ENCODE measurements at regions of chr6 and their contacts with region 1.

Region 1: DNA sequence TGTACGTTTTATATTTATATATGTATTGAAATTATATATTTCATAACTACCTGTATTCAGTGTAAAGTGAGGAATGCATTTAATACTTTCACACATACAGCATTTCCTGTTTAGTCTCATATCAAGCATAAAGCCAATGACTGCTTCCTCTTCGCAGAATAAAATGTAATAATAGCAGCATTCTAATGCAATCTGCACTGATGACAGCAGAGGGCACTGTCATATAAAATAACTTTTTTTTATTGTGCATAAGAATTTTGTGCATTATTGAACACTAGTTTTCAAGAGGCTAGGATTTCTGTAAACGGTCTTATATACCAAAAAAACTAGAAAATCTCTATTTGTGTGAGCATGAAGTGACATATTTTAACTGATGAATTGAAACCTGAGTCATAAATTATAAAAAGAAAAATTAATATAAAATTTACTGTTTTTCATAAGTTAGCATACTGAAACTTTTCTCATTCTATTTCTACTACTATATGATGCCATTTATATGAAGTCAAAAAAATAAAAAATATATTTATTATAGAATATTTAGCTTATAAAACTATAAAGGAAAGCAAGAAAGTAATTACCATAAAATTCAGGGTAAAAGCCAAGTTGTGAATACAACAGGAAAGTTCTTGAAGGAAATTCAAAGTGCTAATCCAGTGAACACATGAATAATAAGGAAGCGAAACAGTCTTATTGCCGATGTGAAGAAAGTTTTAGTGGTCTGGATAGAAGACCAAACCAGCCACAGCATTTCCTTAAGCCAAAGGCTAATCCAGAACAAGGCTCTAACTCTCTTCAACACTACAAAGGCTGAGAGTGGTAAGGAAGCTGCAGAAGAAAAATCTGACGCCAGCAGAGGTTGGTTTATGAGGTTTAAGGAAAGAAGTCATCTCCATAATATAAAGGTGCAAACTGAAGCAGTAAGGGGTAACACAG is 36.3 kb downstream of the RNF146 start:
- DNase-seq: peak in 7 of 9 experiments; percentile 13 to 69 (median 45)
- ATAC-seq: peak; percentile 97
- H3K4me3 ChIP-seq: no peak overlapping the region
- H3K4me3 Mint-ChIP-seq: no peak overlapping the region
- H3K27ac ChIP-seq: no peak overlapping the region
- H3K27ac Mint-ChIP-seq: no peak overlapping the region
- H3K4me1 ChIP-seq: no peaks in the 10 kb centered on the region
- H3K4me1 Mint-ChIP-seq: peaks cover 43% of the 10 kb centered on the region
- H3K27me3 ChIP-seq: no peaks in the 10 kb centered on the region
- H3K27me3 Mint-ChIP-seq: no peaks in the 10 kb centered on the region
- CTCF ChIP-seq: peak; percentile 96

Region 2: GRCh38 chr6:127342946-127343808 is 40.2 kb after region 1 on chr6 and contains the start of gene ECHDC1:
- CTCF ChIA-PET with region 1: no interaction called
- POLR2A ChIA-PET with region 1: no interaction called
- intact Hi-C with region 1: loop called in 1 of 2 experiments (anchors 5 kb)
- DNase-seq: peak; percentile 50 to 85 (median 74)
- ATAC-seq: peak; percentile 85
- H3K4me3 ChIP-seq: peak within 1 kb of the TSS; percentile 65 to 96
- H3K4me3 Mint-ChIP-seq: no peak within 1 kb of the TSS
- H3K27ac ChIP-seq: peak within 1 kb of the TSS; percentile 88 to 93
- H3K27ac Mint-ChIP-seq: no peak within 1 kb of the TSS
- H3K4me1 ChIP-seq: peaks cover 41% of the 10 kb centered on the region
- H3K4me1 Mint-ChIP-seq: peaks cover 14% of the 10 kb centered on the region
- H3K27me3 ChIP-seq: no peaks in the 10 kb centered on the region
- H3K27me3 Mint-ChIP-seq: no peaks in the 10 kb centered on the region
- CTCF ChIP-seq: no peak
- total RNA-seq, gene ECHDC1: 9.3 to 10.0 TPM

Region 3: DNA sequence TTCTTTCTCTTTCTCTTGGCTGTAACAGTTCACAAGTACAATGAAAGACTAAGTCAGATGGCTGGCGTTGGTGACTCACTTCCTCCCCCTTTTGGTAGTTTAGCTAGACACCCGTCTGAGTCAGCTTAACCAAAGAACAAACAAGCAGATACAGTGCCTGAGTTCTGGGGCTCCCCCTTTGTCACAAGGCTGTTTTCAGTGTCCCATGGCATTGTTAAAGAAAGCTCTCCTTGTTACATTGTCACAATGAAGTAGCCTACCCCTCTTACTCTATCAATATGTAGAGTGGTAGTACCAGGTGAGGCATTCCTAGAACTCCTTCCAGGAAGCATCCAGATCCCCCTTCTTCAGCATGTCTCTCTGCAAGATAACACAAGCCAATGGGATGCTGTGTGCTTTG is 117.6 kb after region 1 on chr6:
- CTCF ChIA-PET with region 1: interaction called, 11 read pairs
- POLR2A ChIA-PET with region 1: no interaction called
- intact Hi-C with region 1: loop called (anchors 1 to 2 kb)
- DNase-seq: peak; percentile 12 to 76 (median 58)
- ATAC-seq: peak; percentile 97
- H3K4me3 ChIP-seq: no peak overlapping the region
- H3K4me3 Mint-ChIP-seq: no peak overlapping the region
- H3K27ac ChIP-seq: no peak overlapping the region
- H3K27ac Mint-ChIP-seq: no peak overlapping the region
- H3K4me1 ChIP-seq: no peaks in the 10 kb centered on the region
- H3K4me1 Mint-ChIP-seq: peaks cover 5% of the 10 kb centered on the region
- H3K27me3 ChIP-seq: no peaks in the 10 kb centered on the region
- H3K27me3 Mint-ChIP-seq: peaks cover 7% of the 10 kb centered on the region
- CTCF ChIP-seq: peak; percentile 26

Region 4: DNA sequence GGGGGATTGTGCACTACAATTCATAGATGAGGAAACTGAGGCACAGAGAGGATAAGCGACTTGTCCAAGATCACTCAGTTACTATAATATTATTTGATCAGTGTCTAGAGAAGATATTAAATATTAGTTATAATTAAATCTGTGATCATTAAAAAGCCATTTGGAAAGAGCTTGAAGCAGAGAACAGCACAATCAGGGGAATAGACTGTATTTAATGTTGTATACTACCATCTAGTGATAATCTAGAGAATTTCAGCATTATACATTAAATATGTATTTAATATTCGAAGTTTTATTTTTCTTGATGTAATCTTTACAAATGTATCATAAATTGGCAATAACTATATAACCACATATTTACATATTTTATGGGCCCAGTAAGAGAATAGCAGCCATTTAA is 236.3 kb after region 1 on chr6:
- CTCF ChIA-PET with region 1: interaction called, 7 read pairs
- POLR2A ChIA-PET with region 1: interaction called, 3 read pairs
- intact Hi-C with region 1: loop called (anchors 1 to 2 kb)
- DNase-seq: peak in 1 of 9 experiments; percentile 35
- ATAC-seq: peak; percentile 48
- H3K4me3 ChIP-seq: no peak overlapping the region
- H3K4me3 Mint-ChIP-seq: no peak overlapping the region
- H3K27ac ChIP-seq: no peak overlapping the region
- H3K27ac Mint-ChIP-seq: no peak overlapping the region
- H3K4me1 ChIP-seq: no peaks in the 10 kb centered on the region
- H3K4me1 Mint-ChIP-seq: no peaks in the 10 kb centered on the region
- H3K27me3 ChIP-seq: no peaks in the 10 kb centered on the region
- H3K27me3 Mint-ChIP-seq: peaks cover 17% of the 10 kb centered on the region
- CTCF ChIP-seq: peak; percentile 69